ENCODE measurements at regions of chr18 and their contacts with region 1.

Region 1: DNA sequence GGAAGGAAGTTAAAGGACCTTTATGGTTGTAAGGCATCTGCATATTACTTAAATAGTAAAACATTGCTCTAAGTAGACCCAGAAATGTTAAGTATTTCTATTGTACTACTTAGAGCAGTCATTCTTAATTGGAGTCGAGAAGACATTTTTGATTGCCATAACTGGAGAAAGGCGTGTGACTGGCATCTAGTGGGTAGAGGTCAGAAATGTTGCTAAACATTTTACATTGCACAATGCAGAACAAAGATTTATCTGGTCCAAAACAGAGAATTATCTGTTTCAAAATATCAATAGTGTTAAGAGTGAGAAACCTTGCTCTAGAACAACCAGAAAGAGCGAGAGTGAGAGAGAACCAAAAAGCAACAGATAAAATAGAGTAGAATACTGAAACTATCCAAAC is 23.3 kb upstream of the ROCK1 start:
- DNase-seq: no peak
- ATAC-seq: peak in 1 of 2 donors; percentile 65
- H3K4me3 ChIP-seq: no peak overlapping the region
- H3K27ac ChIP-seq: no peak overlapping the region
- H3K4me1 ChIP-seq: no peaks in the 10 kb centered on the region
- H3K27me3 ChIP-seq: no peaks in the 10 kb centered on the region
- CTCF ChIP-seq: peak in 4 of 5 experiments; percentile 21 to 50 (median 30)
- POLR2A ChIP-seq: no peak

Region 2: GRCh38 chr18:20971886-20972267 is 163.0 kb before region 1 on chr18:
- in situ Hi-C with region 1: loop called in 1 of 4 experiments (anchors 10 kb)
- intact Hi-C with region 1: no loop called
- DNase-seq: no peak
- ATAC-seq: no peak
- H3K4me3 ChIP-seq: no peak overlapping the region
- H3K27ac ChIP-seq: no peak overlapping the region
- H3K4me1 ChIP-seq: no peaks in the 10 kb centered on the region
- H3K27me3 ChIP-seq: no peaks in the 10 kb centered on the region
- CTCF ChIP-seq: peak in 2 of 5 experiments; percentile 18 to 36
- POLR2A ChIP-seq: no peak

Region 3: GRCh38 chr18:21049306-21049705 is 85.6 kb before region 1 on chr18:
- in situ Hi-C with region 1: no loop called
- intact Hi-C with region 1: no loop called
- DNase-seq: no peak
- ATAC-seq: no peak
- H3K4me3 ChIP-seq: no peak overlapping the region
- H3K27ac ChIP-seq: no peak overlapping the region
- H3K4me1 ChIP-seq: peaks cover 37 to 42% of the 10 kb centered on the region in 2 donors
- H3K27me3 ChIP-seq: no peaks in the 10 kb centered on the region
- CTCF ChIP-seq: no peak
- POLR2A ChIP-seq: no peak